ENCODE measurements at regions of chr20 and their contacts with region 1.

Region 1: GRCh38 chr20:32789896-32790750 is 27.9 kb downstream of the DNMT3B start:
- DNase-seq: peak; percentile 83
- ATAC-seq: peak; percentile 73
- H3K4me3 Mint-ChIP-seq: no peak overlapping the region
- H3K27ac Mint-ChIP-seq: peak overlapping the region; percentile 93
- H3K4me1 Mint-ChIP-seq: peaks cover 30% of the 10 kb centered on the region
- H3K27me3 Mint-ChIP-seq: no peaks in the 10 kb centered on the region
- CTCF ChIP-seq: peak; percentile 98

Region 2: DNA sequence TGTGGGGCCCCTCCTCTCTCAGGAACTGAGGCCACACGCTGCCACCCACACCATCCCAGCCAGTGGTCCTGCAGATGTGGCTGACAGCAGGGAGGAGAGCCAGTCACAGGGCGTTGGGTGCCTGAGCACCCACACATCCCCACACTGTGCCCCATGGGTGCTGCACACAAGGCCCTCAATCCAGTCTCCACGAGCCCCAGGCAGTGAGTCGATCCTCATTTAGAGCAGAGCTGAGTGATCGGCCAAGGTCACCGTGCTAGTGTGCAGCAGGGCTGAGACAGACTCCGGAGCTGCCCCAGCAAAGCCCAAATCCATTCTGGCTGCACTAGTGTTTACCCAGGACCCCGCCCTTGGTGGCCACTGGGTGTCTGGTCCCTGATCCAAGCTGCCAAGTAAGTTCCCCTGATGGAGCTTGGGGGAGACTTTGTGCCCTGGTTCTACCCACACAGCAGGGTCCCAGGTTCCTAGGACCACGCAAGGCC is 125.4 kb before region 1 on chr20:
- CTCF ChIA-PET with region 1: interaction called, 10 read pairs
- POLR2A ChIA-PET with region 1: no interaction called
- DNase-seq: no peak
- ATAC-seq: no peak
- H3K4me3 Mint-ChIP-seq: no peak overlapping the region
- H3K27ac Mint-ChIP-seq: no peak overlapping the region
- H3K4me1 Mint-ChIP-seq: peaks cover 9% of the 10 kb centered on the region
- H3K27me3 Mint-ChIP-seq: no peaks in the 10 kb centered on the region
- CTCF ChIP-seq: no peak

Region 3: GRCh38 chr20:32681175-32682084 is 108.7 kb before region 1 on chr20:
- CTCF ChIA-PET with region 1: interaction called, 15 read pairs
- POLR2A ChIA-PET with region 1: no interaction called
- DNase-seq: peak; percentile 63
- ATAC-seq: peak; percentile 80
- H3K4me3 Mint-ChIP-seq: peak overlapping the region; percentile 33
- H3K27ac Mint-ChIP-seq: peak overlapping the region; percentile 86
- H3K4me1 Mint-ChIP-seq: peaks cover 38% of the 10 kb centered on the region
- H3K27me3 Mint-ChIP-seq: no peaks in the 10 kb centered on the region
- CTCF ChIP-seq: no peak

Region 4: GRCh38 chr20:32743237-32744112 is 46.6 kb before region 1 on chr20 and contains the start of gene COMMD7:
- CTCF ChIA-PET with region 1: interaction called, 10 read pairs
- POLR2A ChIA-PET with region 1: no interaction called
- DNase-seq: peak; percentile 71
- ATAC-seq: peak; percentile 83
- H3K4me3 Mint-ChIP-seq: peak within 1 kb of the TSS; percentile 98
- H3K27ac Mint-ChIP-seq: peak within 1 kb of the TSS; percentile 98
- H3K4me1 Mint-ChIP-seq: peaks cover 43% of the 10 kb centered on the region
- H3K27me3 Mint-ChIP-seq: no peaks in the 10 kb centered on the region
- CTCF ChIP-seq: no peak
- total RNA-seq, gene COMMD7: 41.8 to 42.4 TPM (median 42.3 TPM) in 3 replicates

Region 5: DNA sequence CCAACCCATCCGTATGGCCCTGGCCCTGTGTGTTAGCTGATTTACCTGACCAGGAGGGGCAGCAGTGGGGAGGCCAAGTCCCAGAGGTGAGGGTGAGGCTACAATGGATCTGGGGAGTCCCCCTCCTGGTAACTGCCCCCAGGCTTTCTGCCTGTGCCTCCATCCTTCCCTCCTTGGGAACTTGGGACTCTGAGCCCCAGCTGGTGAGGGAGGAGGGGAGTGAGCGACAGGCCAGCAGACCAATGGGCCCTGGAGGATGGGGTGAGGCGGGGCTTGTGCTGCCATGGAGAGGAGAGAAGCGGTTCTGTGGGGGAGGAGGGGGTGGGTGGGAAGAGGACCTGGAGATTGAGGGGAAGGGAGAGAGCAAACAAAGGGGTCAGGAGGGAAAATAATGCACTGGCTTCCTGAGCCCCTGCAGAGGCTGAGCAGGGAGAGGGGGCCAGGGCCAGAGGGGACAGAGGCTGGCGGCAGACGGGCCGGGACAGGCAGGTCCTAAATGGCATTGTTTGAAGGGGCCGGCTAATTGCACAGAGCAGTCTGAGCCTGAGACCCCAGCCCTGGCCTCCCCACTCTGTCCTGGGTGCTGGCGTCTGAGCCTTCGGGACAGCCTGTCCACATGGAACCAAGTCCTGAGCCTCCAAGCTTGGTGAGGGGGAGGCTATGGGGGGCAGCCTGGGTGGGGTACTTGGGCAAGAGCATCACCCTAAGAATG is 10.5 kb before region 1 on chr20:
- CTCF ChIA-PET with region 1: interaction called, 91 read pairs
- POLR2A ChIA-PET with region 1: interaction called, 7 read pairs
- DNase-seq: peak; percentile 81
- ATAC-seq: peak; percentile 45
- H3K4me3 Mint-ChIP-seq: no peak overlapping the region
- H3K27ac Mint-ChIP-seq: no peak overlapping the region
- H3K4me1 Mint-ChIP-seq: peaks cover 75% of the 10 kb centered on the region
- H3K27me3 Mint-ChIP-seq: no peaks in the 10 kb centered on the region
- CTCF ChIP-seq: no peak

Region 6: GRCh38 chr20:32810941-32811340 is 20.8 kb after region 1 on chr20:
- CTCF ChIA-PET with region 1: interaction called, 12 read pairs
- POLR2A ChIA-PET with region 1: interaction called, 3 read pairs
- DNase-seq: no peak
- ATAC-seq: peak; percentile 12
- H3K4me3 Mint-ChIP-seq: no peak overlapping the region
- H3K27ac Mint-ChIP-seq: peak overlapping the region; percentile 93
- H3K4me1 Mint-ChIP-seq: peaks cover 38% of the 10 kb centered on the region
- H3K27me3 Mint-ChIP-seq: no peaks in the 10 kb centered on the region
- CTCF ChIP-seq: no peak

Region 7: DNA sequence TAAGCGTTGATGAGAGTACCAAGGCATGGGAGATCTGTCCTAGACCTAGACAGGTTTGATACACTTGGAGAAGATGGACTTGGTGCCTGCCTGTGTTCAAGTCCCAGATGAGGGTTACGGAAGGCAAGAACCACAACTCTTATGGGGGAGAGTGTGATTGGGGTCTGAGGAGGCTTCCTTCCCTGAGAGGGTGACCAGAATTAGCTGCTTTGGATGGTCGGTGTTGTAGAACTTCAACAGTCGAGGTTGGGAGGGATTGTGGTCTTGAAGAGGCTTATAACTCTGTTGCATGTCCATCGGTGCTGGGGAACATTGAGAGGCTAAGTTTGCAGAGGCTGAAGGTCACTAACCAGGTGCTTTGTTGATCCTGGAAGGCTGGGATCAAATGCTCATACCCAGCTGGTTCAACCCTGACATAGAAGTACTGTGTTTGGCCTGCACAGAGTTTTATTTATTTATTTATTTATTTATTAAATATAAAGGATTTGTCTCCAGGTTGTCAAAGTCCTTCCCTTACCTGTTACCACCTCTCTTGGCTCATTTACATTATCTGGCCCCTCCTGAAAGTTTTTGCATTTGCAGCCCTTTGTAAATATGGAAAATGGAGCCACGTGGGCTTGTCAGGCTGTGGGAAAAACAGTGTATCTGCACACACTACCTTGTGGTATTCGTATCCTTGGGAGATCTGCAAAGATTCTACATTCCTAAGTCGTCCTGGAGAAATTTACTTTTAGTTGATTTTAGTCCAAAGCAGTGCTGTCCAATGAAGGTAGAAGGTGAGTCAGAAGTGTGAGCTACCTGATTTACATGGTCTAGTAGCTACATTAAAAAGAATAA is 52.8 kb after region 1 on chr20:
- CTCF ChIA-PET with region 1: interaction called, 10 read pairs
- POLR2A ChIA-PET with region 1: no interaction called
- DNase-seq: no peak
- ATAC-seq: no peak
- H3K4me3 Mint-ChIP-seq: no peak overlapping the region
- H3K27ac Mint-ChIP-seq: peak overlapping the region; percentile 93
- H3K4me1 Mint-ChIP-seq: peaks cover 17% of the 10 kb centered on the region
- H3K27me3 Mint-ChIP-seq: no peaks in the 10 kb centered on the region
- CTCF ChIP-seq: no peak